Right lobe of liver (tissue), 6 donors: ENCODE measurements at regions of chr1 and their contacts with region 1.

Region 1: GRCh38 chr1:26279456-26280332 is at the start of gene SH3BGRL3:
- DNase-seq: peak; percentile 92 to 93 (median 93)
- ATAC-seq: peak; percentile 74 to 90 (median 89)
- H3K4me3 ChIP-seq: peak within 1 kb of the TSS; percentile 92 to 99 (median 92)
- H3K27ac ChIP-seq: peak within 1 kb of the TSS; percentile 88 to 93 (median 91)
- H3K4me1 ChIP-seq: peaks cover 0 to 49% (median 21%) of the 10 kb centered on the region in 4 donors
- H3K27me3 ChIP-seq: no peaks in the 10 kb centered on the region
- CTCF ChIP-seq: peak; percentile 11 to 41 (median 34)
- POLR2A ChIP-seq: peak; percentile 99
- total RNA-seq, gene SH3BGRL3: 26.3 to 61.8 (median 34.9) TPM

Region 2: GRCh38 chr1:25874934-25875855 is 404.5 kb before region 1 on chr1 and contains the start of gene PAQR7:
- intact Hi-C with region 1: no loop called
- DNase-seq: peak; percentile 81 to 91 (median 89)
- ATAC-seq: peak; percentile 57 to 74 (median 66)
- H3K4me3 ChIP-seq: peak within 1 kb of the TSS; percentile 55 to 61 (median 59)
- H3K27ac ChIP-seq: peak within 1 kb of the TSS; percentile 66 to 70 (median 67)
- H3K4me1 ChIP-seq: peaks cover 0 to 59% (median 25%) of the 10 kb centered on the region in 4 donors
- H3K27me3 ChIP-seq: no peaks in the 10 kb centered on the region
- CTCF ChIP-seq: no peak
- POLR2A ChIP-seq: peak; percentile 56
- total RNA-seq, gene PAQR7: 0.74 to 4.8 (median 2.4) TPM

Region 3: GRCh38 chr1:26321315-26322041 is 41.8 kb after region 1 on chr1:
- intact Hi-C with region 1: loop called (anchors 5 kb)
- DNase-seq: peak; percentile 88 to 89 (median 89)
- ATAC-seq: peak; percentile 93 to 96 (median 94)
- H3K4me3 ChIP-seq: no peak overlapping the region
- H3K27ac ChIP-seq: no peak overlapping the region
- H3K4me1 ChIP-seq: no peaks in the 10 kb centered on the region
- H3K27me3 ChIP-seq: no peaks in the 10 kb centered on the region
- CTCF ChIP-seq: peak; percentile 86 to 90 (median 89)
- POLR2A ChIP-seq: no peak

Region 4: GRCh38 chr1:26363549-26364448 is 84.1 kb after region 1 on chr1:
- intact Hi-C with region 1: loop called in 1 of 2 experiments (anchors 10 kb)
- DNase-seq: peak; percentile 82 to 87 (median 83)
- ATAC-seq: peak; percentile 67 to 81 (median 78)
- H3K4me3 ChIP-seq: no peak overlapping the region
- H3K27ac ChIP-seq: no peak overlapping the region
- H3K4me1 ChIP-seq: peaks cover 0 to 7% (median 3%) of the 10 kb centered on the region in 4 donors
- H3K27me3 ChIP-seq: no peaks in the 10 kb centered on the region
- CTCF ChIP-seq: peak; percentile 83 to 95 (median 92)
- POLR2A ChIP-seq: no peak